Right ventricle myocardium inferior (tissue), 1 donor: ENCODE measurements at regions of chr18 and their contacts with region 1.

Region 1: DNA sequence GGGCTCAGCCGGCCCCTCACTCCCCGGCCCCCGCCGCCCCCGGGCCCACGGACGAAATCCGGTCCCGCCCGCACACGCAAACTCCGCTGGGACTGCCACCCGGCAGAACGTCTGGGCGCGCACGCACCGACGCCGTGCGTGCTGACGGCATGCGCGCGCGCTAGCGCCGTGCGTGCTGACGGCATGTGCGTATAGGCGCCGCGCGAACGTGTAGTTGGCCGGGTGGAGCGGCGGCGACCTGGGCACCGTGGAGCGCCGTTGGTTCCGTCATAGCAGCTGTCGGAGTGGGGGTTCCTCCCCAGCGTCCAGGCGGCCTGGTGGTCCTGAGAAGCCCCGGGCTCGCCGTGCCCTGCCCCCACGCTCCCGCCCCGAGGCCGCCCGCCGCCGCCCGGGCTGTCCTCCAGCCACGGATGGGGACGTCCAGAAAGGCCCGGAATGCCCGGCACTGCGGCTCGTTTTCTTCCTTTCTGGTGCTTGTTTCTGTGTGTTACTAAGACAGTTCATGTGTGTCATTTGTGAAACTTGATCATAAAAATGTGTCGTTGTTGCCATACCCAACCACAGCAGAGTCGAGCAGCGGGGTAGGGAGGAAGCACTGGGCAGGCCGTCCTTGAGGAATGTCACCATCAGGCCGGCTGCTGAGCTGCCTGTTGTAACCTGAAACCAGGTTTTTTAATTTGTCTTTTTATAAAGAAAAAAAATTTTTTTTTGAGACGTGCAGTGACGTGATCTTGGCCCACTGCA is at the start of gene TXNL4A:
- DNase-seq: peak; percentile 95
- ATAC-seq: peak; percentile 99
- total RNA-seq, gene TXNL4A: 90.8 TPM

Region 2: GRCh38 chr18:79556829-79557585 is 431.6 kb before region 1 on chr18:
- intact Hi-C with region 1: no loop called
- DNase-seq: no peak
- ATAC-seq: no peak

Region 3: GRCh38 chr18:79679111-79679872 is 309.3 kb before region 1 on chr18 and contains the start of gene CTDP1:
- intact Hi-C with region 1: loop called (anchors 1 kb)
- DNase-seq: peak; percentile 100
- ATAC-seq: peak; percentile 99
- total RNA-seq, gene CTDP1: 8.4 TPM

Region 4: GRCh38 chr18:79951578-79952455 is 36.8 kb before region 1 on chr18 and contains the start of gene SLC66A2:
- intact Hi-C with region 1: loop called (anchors 5 kb)
- DNase-seq: peak; percentile 97
- ATAC-seq: peak; percentile 95
- total RNA-seq, gene SLC66A2: 29.3 TPM

Region 5: GRCh38 chr18:80034068-80034851 is 45.6 kb after region 1 on chr18 and contains the start of gene RBFA:
- intact Hi-C with region 1: loop called (anchors 2 kb)
- DNase-seq: peak; percentile 100
- ATAC-seq: peak; percentile 97
- total RNA-seq, gene RBFA: 25.3 TPM

Region 6: GRCh38 chr18:80108728-80109675 is 120.4 kb after region 1 on chr18 and contains the start of gene ADNP2:
- intact Hi-C with region 1: loop called (anchors 5 kb)
- DNase-seq: peak; percentile 84
- ATAC-seq: peak; percentile 89
- total RNA-seq, gene ADNP2: 7.4 TPM